ENCODE measurements at regions of chr1 and their contacts with region 1.

Region 1: DNA sequence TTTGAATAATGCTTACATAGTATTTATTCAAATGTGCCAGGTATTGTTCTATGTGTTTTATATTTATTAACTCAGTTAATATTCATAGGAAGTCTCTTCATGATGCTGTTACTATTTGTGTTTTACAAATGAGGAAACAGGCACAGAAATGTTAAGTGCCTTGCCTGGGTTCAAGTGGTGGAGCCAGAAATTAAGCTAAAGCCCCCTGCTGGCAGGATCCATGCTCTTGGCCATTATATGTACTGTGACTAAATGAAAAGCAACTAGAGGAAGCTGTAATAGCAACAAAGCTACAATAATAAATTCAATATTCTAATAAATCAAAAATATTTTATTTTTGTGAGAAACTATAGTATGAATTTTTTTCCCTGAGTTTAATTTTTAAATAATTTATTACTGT is 30.0 kb downstream of the IARS2 start:
- DNase-seq: no peak
- ATAC-seq: no peak
- H3K4me3 ChIP-seq: no peak overlapping the region
- H3K27ac ChIP-seq: no peak overlapping the region
- H3K4me1 ChIP-seq: peaks cover 2% of the 10 kb centered on the region; the same call in 1 of the 2 replicates
- H3K27me3 ChIP-seq: no peaks in the 10 kb centered on the region
- CTCF ChIP-seq: peak; percentile 24; the same call in 1 of the 2 replicates
- POLR2A ChIP-seq: no peak
- RAD21 ChIP-seq: no peak

Region 2: DNA sequence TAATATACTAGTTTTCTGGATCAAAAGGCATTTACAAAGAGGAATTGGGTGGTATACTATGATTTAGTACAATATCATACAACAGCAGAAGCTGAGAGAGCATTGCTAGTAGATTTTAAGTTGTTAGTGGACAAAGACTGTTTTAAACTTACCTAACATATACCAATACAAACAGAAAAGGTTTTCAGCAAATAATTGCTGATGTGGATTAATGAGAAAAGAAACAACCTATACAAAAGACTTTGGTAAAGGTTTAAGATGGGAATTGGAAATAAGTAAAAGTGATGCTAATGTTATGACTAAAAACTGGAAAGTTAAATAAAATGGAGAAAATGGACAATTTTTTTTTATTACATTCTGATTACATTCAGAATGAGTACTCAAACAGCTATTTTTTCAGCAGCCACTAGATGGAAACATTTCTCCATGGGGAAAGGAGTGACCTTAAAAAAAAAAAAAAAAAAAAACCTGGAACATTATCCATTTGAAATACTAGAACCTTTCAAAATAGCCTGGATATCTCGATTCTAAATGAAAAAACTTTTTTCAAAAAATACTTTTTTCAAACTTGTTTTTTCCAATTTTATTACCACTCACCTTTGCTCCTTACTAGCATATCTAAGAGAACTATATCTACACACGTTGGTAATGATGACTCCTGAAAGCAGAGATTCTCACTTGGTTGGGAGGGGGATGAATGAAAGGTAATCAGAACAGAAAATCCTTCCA is 132.9 kb before region 1 on chr1:
- CTCF ChIA-PET with region 1: no interaction called
- POLR2A ChIA-PET with region 1: no interaction called
- dilution Hi-C with region 1: no loop called
- in situ Hi-C with region 1: no loop called
- intact Hi-C with region 1: loop called (anchors 5 kb)
- DNase-seq: peak; percentile 51
- ATAC-seq: peak; percentile 61; the same call in 1 of the 2 replicates
- H3K4me3 ChIP-seq: no peak overlapping the region
- H3K27ac ChIP-seq: no peak overlapping the region
- H3K4me1 ChIP-seq: no peaks in the 10 kb centered on the region; the same call in 1 of the 2 replicates
- H3K27me3 ChIP-seq: no peaks in the 10 kb centered on the region
- CTCF ChIP-seq: peak; percentile 68
- POLR2A ChIP-seq: no peak
- RAD21 ChIP-seq: peak; percentile 55

Region 3: DNA sequence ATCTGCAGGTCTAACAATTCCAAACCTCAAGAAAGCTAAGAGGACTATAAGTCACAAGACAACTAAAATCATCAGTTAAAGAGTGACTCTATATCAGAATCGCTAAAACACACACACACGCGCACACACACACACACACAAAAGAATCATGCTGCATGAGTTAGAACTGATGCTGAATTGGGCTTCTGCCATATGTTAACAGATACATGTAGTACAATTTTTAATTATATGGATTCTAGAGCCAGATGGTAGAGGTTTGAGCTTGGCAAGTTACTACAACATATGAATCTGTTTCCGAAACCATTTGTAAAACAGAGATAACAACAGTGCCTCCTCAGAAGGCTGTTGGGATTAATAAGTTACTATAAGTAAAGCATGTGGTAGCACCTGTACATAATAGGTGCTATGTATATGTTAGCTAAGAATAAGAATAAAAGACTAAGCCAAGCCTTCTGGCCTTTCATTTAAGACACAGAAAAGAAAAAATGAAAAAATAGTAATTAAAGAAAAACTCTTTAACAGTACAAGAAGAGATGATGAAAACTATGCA is 95.5 kb before region 1 on chr1:
- CTCF ChIA-PET with region 1: no interaction called
- POLR2A ChIA-PET with region 1: no interaction called
- dilution Hi-C with region 1: no loop called
- in situ Hi-C with region 1: no loop called
- intact Hi-C with region 1: loop called (anchors 5 kb)
- DNase-seq: no peak
- ATAC-seq: no peak
- H3K4me3 ChIP-seq: no peak overlapping the region
- H3K27ac ChIP-seq: no peak overlapping the region
- H3K4me1 ChIP-seq: no peaks in the 10 kb centered on the region
- H3K27me3 ChIP-seq: no peaks in the 10 kb centered on the region
- CTCF ChIP-seq: no peak
- POLR2A ChIP-seq: no peak
- RAD21 ChIP-seq: no peak

Measured in IMR-90 (cell line).